CD4-positive, alpha-beta T cell (primary cell): ENCODE measurements at regions of chr1 and their contacts with region 1.

Region 1: DNA sequence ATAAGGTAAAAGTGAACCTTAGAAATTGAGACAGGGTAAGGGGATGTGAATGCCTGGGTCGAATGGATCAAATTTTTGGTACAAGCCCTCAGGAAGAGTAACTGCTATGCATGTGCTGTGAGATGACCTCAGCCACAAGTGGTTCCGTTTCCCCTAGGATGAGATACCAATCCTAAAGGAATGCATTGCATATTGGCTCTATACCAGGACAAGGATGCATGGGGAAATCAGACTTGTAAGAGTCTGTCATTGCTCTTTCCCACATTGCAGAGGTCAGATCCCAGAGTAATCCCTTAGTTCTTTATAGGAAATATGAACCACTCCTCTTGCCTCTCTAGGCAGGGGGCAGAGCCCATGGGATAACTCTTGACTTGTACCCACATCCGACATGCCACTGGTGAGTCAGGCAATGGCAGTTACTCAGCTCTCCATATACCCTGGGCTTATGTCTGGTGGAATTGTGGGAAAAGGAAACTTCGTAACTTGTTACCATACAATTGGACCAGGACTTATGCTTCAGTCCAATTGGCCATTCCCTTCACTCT is 428.3 kb upstream of the ZRANB2 start:
- DNase-seq: no peak
- ATAC-seq: no peak
- H3K4me3 ChIP-seq: no peak overlapping the region
- H3K4me3 Mint-ChIP-seq: no peak overlapping the region
- H3K27ac ChIP-seq: no peak overlapping the region
- H3K27ac Mint-ChIP-seq: no peak overlapping the region
- H3K4me1 ChIP-seq: no peaks in the 10 kb centered on the region
- H3K4me1 Mint-ChIP-seq: no peaks in the 10 kb centered on the region
- H3K27me3 ChIP-seq: no peaks in the 10 kb centered on the region
- H3K27me3 Mint-ChIP-seq: no peaks in the 10 kb centered on the region
- CTCF ChIP-seq: no peak

Region 2: GRCh38 chr1:70874111-70874510 is 635.0 kb before region 1 on chr1:
- CTCF ChIA-PET with region 1: no interaction called
- POLR2A ChIA-PET with region 1: no interaction called
- intact Hi-C with region 1: no loop called
- DNase-seq: no peak
- ATAC-seq: no peak
- H3K4me3 ChIP-seq: no peak overlapping the region
- H3K4me3 Mint-ChIP-seq: no peak overlapping the region
- H3K27ac ChIP-seq: no peak overlapping the region
- H3K27ac Mint-ChIP-seq: no peak overlapping the region
- H3K4me1 ChIP-seq: no peaks in the 10 kb centered on the region
- H3K4me1 Mint-ChIP-seq: no peaks in the 10 kb centered on the region
- H3K27me3 ChIP-seq: no peaks in the 10 kb centered on the region
- H3K27me3 Mint-ChIP-seq: peaks cover 6% of the 10 kb centered on the region
- CTCF ChIP-seq: no peak

Region 3: GRCh38 chr1:71572038-71572437 is 62.9 kb after region 1 on chr1:
- CTCF ChIA-PET with region 1: no interaction called
- POLR2A ChIA-PET with region 1: no interaction called
- intact Hi-C with region 1: loop called in 1 of 2 experiments (anchors 2 kb)
- DNase-seq: no peak
- ATAC-seq: no peak
- H3K4me3 ChIP-seq: no peak overlapping the region
- H3K4me3 Mint-ChIP-seq: no peak overlapping the region
- H3K27ac ChIP-seq: no peak overlapping the region
- H3K27ac Mint-ChIP-seq: no peak overlapping the region
- H3K4me1 ChIP-seq: no peaks in the 10 kb centered on the region
- H3K4me1 Mint-ChIP-seq: no peaks in the 10 kb centered on the region
- H3K27me3 ChIP-seq: no peaks in the 10 kb centered on the region
- H3K27me3 Mint-ChIP-seq: no peaks in the 10 kb centered on the region
- CTCF ChIP-seq: no peak